PC-9 (cell line): ENCODE measurements at regions of chr10 and their contacts with region 1.

Region 1: DNA sequence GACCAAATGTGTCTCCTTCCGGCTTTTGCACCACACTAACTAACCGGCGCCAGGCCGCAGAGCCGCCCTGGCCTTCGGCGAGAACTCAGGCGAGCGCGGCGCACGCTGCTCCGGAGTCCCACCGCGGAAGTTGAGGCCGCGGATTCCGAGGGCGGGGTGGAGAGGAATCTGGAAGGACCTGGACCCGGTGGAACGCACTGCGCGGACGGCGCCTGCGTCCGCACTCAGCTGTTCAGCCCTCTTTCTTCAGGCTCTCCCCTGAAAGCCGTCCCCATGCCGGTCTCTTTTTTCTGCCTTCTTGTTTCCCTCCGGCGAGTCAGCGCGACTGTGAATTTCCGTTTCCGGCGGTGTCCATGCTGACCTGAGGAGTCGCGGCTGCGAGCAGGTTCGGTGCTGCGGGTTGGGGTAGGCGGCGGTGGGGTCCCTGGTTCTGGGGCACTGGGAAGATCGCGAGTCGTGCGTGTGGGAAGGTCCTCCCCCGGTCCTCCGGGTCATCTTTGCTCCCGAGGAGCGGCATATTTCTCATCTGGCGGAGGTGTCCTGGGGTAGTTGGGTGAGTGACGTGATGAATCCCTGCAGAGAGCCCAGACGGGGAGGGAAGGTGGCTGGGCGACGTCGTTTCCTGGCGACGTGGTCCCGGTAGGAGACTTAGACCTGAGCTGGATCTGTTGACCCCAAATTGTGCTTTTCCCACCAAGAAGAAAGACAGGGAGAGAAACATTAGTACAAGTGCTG is at the start of gene BMS1:
- DNase-seq: peak; percentile 91 to 95
- H3K4me3 ChIP-seq: peak within 1 kb of the TSS; percentile 96
- H3K27ac ChIP-seq: peak within 1 kb of the TSS; percentile 80
- H3K4me1 ChIP-seq: peaks cover 14% of the 10 kb centered on the region
- H3K27me3 ChIP-seq: no peaks in the 10 kb centered on the region
- CTCF ChIP-seq: no peak
- total RNA-seq, gene BMS1: 16.3 and 20.0 TPM in 2 replicates

Region 2: DNA sequence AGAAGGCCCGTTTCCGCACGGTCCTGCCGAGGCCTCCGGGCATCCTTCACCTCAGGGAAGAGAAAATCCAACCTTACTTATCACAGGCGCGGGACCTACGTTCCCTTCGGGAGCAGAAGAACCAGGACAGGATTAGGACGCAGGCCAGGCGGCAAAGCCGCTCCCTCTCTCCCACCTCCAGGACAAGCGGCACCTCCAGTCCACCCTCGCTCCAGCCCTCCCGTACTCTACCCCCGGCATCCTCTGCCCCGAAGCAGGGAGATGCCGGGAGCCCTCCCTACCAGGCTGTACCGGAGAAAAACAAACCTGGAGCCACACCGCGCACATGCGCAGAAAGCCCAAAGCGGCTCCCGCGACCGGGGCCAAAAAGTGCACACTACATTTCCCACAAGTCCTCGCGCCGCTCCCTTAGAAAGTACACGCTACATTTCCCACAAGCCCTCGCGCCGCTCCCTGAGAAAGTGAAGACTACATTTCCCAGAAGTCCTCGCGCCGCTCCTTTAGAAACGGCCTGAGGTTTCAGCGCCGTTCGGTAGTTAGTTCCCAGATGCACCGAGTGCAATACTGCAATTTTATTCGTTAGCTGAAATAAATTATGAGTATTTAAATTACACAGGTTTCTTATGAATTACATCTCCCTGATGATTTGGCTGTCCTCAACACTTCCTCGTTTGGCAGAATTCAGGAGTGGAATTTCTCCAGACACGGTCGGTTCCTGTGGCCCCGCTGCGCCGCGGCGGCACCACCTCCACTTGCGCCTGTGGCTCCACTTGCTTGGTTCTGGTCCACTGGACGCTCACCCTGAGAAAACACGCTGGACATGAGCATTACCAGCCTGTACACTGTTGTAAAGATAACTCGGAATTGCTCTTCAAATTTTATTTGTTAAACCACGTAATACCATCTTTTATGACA is 229.9 kb before region 1 on chr10:
- CTCF ChIA-PET with region 1: no interaction called
- POLR2A ChIA-PET with region 1: no interaction called
- intact Hi-C with region 1: loop called (anchors 2 kb)
- DNase-seq: peak; percentile 95 to 96
- H3K4me3 ChIP-seq: peak overlapping the region; percentile 76
- H3K27ac ChIP-seq: no peak overlapping the region
- H3K4me1 ChIP-seq: peaks cover 7% of the 10 kb centered on the region
- H3K27me3 ChIP-seq: no peaks in the 10 kb centered on the region
- CTCF ChIP-seq: no peak

Region 3: DNA sequence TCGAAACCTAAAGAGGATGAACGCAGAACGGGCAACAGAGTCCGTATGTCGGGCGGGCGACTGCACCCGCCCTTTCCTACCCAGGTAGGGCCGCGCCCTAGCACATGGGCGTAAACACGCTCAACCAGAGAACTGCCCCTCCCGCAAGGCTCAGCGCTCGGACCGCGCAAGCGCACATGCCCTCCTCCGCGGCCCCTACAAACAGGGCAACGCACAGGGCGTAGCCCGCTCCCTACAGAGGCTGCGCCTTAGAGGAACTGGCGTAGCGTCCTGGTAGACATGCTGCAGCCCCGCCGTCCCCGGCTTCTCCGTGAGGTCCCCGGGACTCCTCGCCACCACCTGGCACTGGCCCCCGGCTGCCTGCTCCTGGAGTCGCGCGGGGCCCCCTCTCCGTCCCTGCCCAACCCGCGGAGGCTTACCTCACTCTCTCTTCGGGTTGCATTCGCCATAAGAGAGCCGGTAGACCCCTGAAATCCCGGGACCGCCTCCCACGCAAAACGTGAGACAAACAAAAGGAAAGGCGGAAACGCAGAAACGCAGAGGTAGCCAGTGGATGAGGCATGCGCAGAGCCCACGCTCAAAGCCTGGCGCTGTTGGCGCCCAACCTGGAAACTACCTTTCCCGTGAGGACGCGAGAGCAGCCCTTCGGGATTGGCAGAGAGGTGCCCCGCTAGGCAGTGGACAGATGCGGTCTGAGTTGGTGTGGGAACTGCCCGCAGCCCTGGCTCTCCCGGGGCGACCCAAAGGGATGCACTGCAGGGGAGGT is 144.4 kb before region 1 on chr10 and contains the start of gene ZNF33B:
- CTCF ChIA-PET with region 1: no interaction called
- POLR2A ChIA-PET with region 1: no interaction called
- intact Hi-C with region 1: loop called (anchors 1 kb)
- DNase-seq: peak; percentile 93 to 98
- H3K4me3 ChIP-seq: peak within 1 kb of the TSS; percentile 68
- H3K27ac ChIP-seq: peak within 1 kb of the TSS; percentile 85
- H3K4me1 ChIP-seq: peaks cover 28% of the 10 kb centered on the region
- H3K27me3 ChIP-seq: no peaks in the 10 kb centered on the region
- CTCF ChIP-seq: no peak
- total RNA-seq, gene ZNF33B: 26.5 and 28.4 TPM in 2 replicates

Region 4: GRCh38 chr10:42690449-42691360 is 91.9 kb before region 1 on chr10:
- CTCF ChIA-PET with region 1: no interaction called
- POLR2A ChIA-PET with region 1: no interaction called
- intact Hi-C with region 1: loop called (anchors 1 kb)
- DNase-seq: peak; percentile 8 to 52
- H3K4me3 ChIP-seq: peak overlapping the region; percentile 48; the same call in 1 of the 2 replicates
- H3K27ac ChIP-seq: no peak overlapping the region
- H3K4me1 ChIP-seq: no peaks in the 10 kb centered on the region
- H3K27me3 ChIP-seq: no peaks in the 10 kb centered on the region
- CTCF ChIP-seq: peak; percentile 49

Region 5: DNA sequence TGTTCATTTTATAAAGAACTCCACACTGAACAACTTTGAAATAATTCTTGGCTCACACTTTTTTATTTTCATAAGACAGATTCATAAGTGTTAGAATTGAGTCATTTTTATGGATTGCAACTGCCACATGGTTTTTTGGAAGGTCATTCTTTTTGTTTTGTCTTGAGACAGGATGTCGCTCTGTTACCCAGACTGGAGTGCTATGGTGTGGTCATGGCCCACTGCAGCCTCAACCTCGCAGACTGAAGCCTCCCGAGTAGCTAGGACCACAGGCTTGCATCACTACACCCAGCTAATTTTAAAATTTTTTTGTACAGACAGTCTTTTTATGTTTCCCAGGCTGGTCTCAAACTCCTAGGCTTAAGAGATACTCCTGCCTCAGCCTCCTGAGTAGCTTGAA is 20.3 kb after region 1 on chr10:
- CTCF ChIA-PET with region 1: no interaction called
- POLR2A ChIA-PET with region 1: no interaction called
- intact Hi-C with region 1: loop called (anchors 2 kb)
- DNase-seq: no peak
- H3K4me3 ChIP-seq: no peak overlapping the region
- H3K27ac ChIP-seq: no peak overlapping the region
- H3K4me1 ChIP-seq: no peaks in the 10 kb centered on the region
- H3K27me3 ChIP-seq: no peaks in the 10 kb centered on the region
- CTCF ChIP-seq: no peak